ENCODE measurements at regions of chr5 and their contacts with region 1.

Region 1: GRCh38 chr5:173204185-173204979 is 30.6 kb downstream of the NKX2-5 start:
- DNase-seq: peak; percentile 36
- H3K4me3 ChIP-seq: no peak overlapping the region
- H3K27ac ChIP-seq: no peak overlapping the region
- H3K4me1 ChIP-seq: no peaks in the 10 kb centered on the region
- H3K27me3 ChIP-seq: peaks cover 6 to 9% of the 10 kb centered on the region in 2 experiments
- CTCF ChIP-seq: peak; percentile 31 to 33
- POLR2A ChIP-seq: no peak

Region 2: GRCh38 chr5:173010547-173011464 is 193.6 kb before region 1 on chr5:
- CTCF ChIA-PET with region 1: interaction called, 5 read pairs
- POLR2A ChIA-PET with region 1: no interaction called
- dilution Hi-C with region 1: no loop called
- intact Hi-C with region 1: loop called (anchors 1 kb)
- DNase-seq: peak; percentile 75
- H3K4me3 ChIP-seq: no peak overlapping the region
- H3K27ac ChIP-seq: no peak overlapping the region
- H3K4me1 ChIP-seq: peaks cover 2% of the 10 kb centered on the region
- H3K27me3 ChIP-seq: no peaks in the 10 kb centered on the region
- CTCF ChIP-seq: peak; percentile 41 to 52
- POLR2A ChIP-seq: no peak

Measured in endothelial cell of umbilical vein (primary cell).